ENCODE measurements at regions of chr9 and their contacts with region 1.

Region 1: GRCh38 chr9:4762108-4762885 is 21.3 kb upstream of the AK3 start:
- DNase-seq: peak; percentile 82

Region 2: GRCh38 chr9:4984621-4985385 is 222.5 kb after region 1 on chr9 and contains the start of gene JAK2:
- in situ Hi-C with region 1: loop called (anchors 25 kb)
- DNase-seq: peak; percentile 96

Region 3: GRCh38 chr9:5062631-5063030 is 300.3 kb after region 1 on chr9:
- in situ Hi-C with region 1: no loop called
- DNase-seq: no peak

Region 4: GRCh38 chr9:5186416-5187169 is 424.3 kb after region 1 on chr9:
- in situ Hi-C with region 1: loop called (anchors 25 kb)
- DNase-seq: peak; percentile 55

Region 5: GRCh38 chr9:5437254-5438216 is 675.2 kb after region 1 on chr9 and contains the start of gene PLGRKT:
- in situ Hi-C with region 1: loop called (anchors 25 kb)
- DNase-seq: peak; percentile 94

Region 6: DNA sequence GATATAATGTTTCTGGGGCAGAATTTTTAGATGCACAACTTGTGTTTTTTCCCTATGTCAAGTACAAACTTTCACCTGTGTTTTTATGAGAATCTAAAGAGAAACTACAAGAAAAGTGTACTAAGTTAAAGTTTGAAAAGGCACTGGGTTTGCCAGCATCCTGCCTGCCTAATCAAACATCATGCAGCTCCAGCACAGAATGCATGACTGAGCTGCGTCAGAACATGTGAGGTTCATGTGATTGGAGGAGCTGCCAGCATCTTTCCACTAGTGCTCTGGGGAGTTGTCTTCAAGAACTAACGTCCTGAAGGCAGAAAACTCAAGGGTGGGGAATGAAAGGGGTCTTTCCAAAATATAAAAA is 820.5 kb after region 1 on chr9:
- in situ Hi-C with region 1: loop called (anchors 25 kb)
- DNase-seq: no peak